MCF 10A (cell line): ENCODE measurements at regions of chr1 and their contacts with region 1.

Region 1: DNA sequence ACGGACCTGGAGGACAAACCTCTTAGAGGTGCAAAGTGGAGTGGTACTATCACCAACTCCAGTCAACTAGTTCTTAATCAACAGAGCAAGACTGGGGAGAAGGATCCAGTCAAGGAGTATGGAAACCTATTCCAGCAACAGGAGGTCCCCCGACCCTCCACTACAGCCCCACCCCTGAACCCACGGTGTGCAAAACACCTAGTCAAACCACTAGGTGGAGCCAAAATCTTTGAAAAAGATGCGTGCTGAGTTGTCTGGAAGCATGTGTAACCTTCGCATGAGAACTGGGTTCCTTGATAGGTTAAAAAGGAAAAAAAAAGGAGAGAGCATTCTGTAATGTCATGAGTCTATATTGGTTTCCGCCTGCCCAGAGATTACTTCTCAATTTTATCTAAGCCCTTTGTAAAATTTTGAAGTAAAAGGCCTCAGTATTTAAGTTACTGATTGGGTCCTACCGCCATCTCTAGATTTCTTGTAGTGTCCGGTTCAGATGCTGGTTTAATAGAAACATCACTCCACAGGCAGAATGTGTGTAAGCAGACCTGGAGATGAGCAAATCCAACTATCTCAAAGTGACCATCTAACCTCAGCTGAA is 81.9 kb upstream of the HAO2 start:
- DNase-seq: peak; percentile 70
- H3K4me3 Mint-ChIP-seq: no peak overlapping the region
- H3K27ac Mint-ChIP-seq: no peak overlapping the region
- H3K4me1 Mint-ChIP-seq: peaks cover 14% of the 10 kb centered on the region
- H3K27me3 Mint-ChIP-seq: peaks cover 4% of the 10 kb centered on the region
- CTCF ChIP-seq: peak; percentile 60

Region 2: GRCh38 chr1:119327436-119328155 is 40.9 kb after region 1 on chr1:
- CTCF ChIA-PET with region 1: no interaction called
- POLR2A ChIA-PET with region 1: no interaction called
- intact Hi-C with region 1: no loop called
- DNase-seq: no peak
- H3K4me3 Mint-ChIP-seq: no peak overlapping the region
- H3K27ac Mint-ChIP-seq: no peak overlapping the region
- H3K4me1 Mint-ChIP-seq: no peaks in the 10 kb centered on the region
- H3K27me3 Mint-ChIP-seq: no peaks in the 10 kb centered on the region
- CTCF ChIP-seq: no peak

Region 3: DNA sequence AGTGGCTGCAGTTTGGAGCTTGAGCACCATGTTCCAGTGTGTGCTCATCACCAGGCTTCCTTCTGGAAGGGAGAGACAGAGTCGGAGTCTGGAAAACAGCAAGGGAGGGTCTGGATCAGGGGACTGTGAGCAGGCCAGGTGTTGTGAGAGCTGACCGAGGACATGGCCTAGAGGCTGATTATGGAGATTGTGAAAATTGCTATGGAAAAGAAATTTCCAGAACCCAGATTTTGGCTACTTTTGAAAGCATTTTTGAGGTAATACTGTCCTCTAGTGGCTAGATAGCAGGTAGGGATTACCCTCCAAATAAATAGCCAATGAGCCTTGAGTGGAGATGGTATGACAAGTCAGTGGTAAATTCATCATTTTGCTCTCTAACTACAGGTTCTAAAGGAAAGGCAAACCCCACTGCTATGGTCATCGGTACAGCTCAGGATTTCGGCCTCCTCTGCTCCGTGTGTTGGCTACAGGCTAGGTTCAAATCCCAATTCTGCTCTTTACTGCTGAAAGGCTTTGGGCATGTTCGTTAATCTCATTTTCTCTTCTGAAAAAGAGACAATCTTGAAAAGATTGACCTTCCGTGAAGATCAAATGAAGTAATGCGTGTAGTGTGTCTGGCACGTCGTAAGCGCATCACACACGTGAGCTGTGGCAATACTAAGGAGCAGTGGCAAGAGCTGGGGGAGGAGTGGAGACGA is 80.9 kb after region 1 on chr1:
- CTCF ChIA-PET with region 1: interaction called, 37 read pairs
- POLR2A ChIA-PET with region 1: interaction called, 4 read pairs
- intact Hi-C with region 1: loop called (anchors 1 kb)
- DNase-seq: peak; percentile 60
- H3K4me3 Mint-ChIP-seq: no peak overlapping the region
- H3K27ac Mint-ChIP-seq: no peak overlapping the region
- H3K4me1 Mint-ChIP-seq: peaks cover 14% of the 10 kb centered on the region
- H3K27me3 Mint-ChIP-seq: no peaks in the 10 kb centered on the region
- CTCF ChIP-seq: peak; percentile 94

Region 4: GRCh38 chr1:119449964-119450363 is 163.3 kb after region 1 on chr1:
- CTCF ChIA-PET with region 1: no interaction called
- POLR2A ChIA-PET with region 1: no interaction called
- intact Hi-C with region 1: no loop called
- DNase-seq: peak; percentile 42
- H3K4me3 Mint-ChIP-seq: no peak overlapping the region
- H3K27ac Mint-ChIP-seq: no peak overlapping the region
- H3K4me1 Mint-ChIP-seq: peaks cover 14% of the 10 kb centered on the region
- H3K27me3 Mint-ChIP-seq: no peaks in the 10 kb centered on the region
- CTCF ChIP-seq: no peak